Heart right ventricle (tissue), 16 donors: ENCODE measurements at regions of chr22 and their contacts with region 1.

Region 1: GRCh38 chr22:37887610-37888378 is 18.3 kb upstream of the MICALL1 start:
- DNase-seq: no peak
- ATAC-seq: peak; percentile 47 to 77 (median 66)
- H3K4me3 ChIP-seq: no peak overlapping the region
- H3K27ac ChIP-seq: peak overlapping the region in 3 of 10 donors; percentile 39 to 40 (median 39)
- H3K4me1 ChIP-seq: peaks cover 0 to 25% (median 9%) of the 10 kb centered on the region in 9 donors
- H3K27me3 ChIP-seq: no peaks in the 10 kb centered on the region
- CTCF ChIP-seq: peak; percentile 6 to 64 (median 52)

Region 2: GRCh38 chr22:37777122-37777687 is 110.6 kb before region 1 on chr22:
- intact Hi-C with region 1: no loop called
- DNase-seq: peak; percentile 31 to 40
- ATAC-seq: peak in 6 of 8 donors; percentile 2 to 36 (median 22)
- H3K4me3 ChIP-seq: no peak overlapping the region
- H3K27ac ChIP-seq: peak overlapping the region in 1 of 10 donors; percentile 6
- H3K4me1 ChIP-seq: peaks cover 0 to 24% (median 9%) of the 10 kb centered on the region in 9 donors
- H3K27me3 ChIP-seq: no peaks in the 10 kb centered on the region
- CTCF ChIP-seq: no peak

Region 3: DNA sequence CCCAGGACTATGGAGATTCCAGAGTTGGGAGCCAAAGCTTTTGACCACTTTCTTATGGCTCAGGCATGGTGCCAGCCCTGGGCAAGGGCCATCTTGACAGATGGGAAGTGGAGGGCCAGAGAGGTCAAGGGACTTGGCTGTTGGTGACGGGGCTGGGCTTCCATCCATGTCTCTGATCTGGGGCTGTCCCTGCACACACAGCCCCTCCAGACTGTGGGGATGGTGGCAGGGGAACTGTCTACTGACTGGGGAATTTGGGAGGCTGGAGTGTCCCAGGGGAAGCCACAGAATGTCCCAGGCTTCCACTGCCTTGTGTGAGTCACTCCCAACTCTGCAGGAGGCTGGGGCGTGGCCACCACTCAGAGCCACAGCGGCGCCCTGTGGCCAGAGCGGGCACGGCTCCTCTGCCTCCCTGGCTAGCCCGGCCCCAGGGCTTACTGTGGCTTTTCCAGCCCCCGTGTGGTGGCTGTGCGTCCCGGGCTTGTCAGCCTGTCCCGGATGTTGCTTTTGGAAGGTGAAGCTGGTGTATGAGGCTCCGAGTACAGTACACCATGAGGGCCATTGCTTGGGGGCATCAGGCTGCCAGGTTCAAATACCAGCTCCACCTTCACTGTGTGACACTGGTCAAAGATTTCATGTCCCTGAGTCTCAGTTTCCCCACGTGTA is 46.0 kb after region 1 on chr22:
- intact Hi-C with region 1: loop called in 6 of 10 experiments (anchors 5 to 10 kb)
- DNase-seq: peak; percentile 89 to 90
- ATAC-seq: peak; percentile 94 to 98 (median 97)
- H3K4me3 ChIP-seq: no peak overlapping the region
- H3K27ac ChIP-seq: peak overlapping the region in 9 of 10 donors; percentile 31 to 80 (median 57)
- H3K4me1 ChIP-seq: peaks cover 7 to 46% (median 30%) of the 10 kb centered on the region in 9 donors
- H3K27me3 ChIP-seq: no peaks in the 10 kb centered on the region
- CTCF ChIP-seq: peak; percentile 90 to 100 (median 98)

Region 4: DNA sequence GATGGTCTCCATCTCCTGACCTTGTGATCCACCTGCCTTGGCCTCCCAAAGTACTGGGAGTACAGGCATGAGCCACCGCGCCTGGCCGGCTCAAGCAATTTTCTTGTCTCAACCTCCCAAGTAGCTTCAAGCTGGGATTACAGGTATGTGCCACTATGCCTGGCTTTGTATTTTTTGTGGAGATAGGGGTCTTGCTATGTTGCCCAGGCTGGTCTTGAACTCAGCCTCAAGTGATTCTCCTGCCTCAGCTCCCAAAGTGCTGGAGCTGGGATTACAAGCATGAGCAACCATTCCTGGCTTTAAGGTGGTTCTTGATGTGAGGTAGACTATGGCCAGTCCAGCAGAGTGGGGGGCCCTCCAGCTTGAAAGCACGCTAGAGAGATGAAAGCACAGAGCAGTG is 73.3 kb after region 1 on chr22:
- intact Hi-C with region 1: loop called in 4 of 10 experiments (anchors 5 to 10 kb)
- DNase-seq: no peak
- ATAC-seq: no peak
- H3K4me3 ChIP-seq: no peak overlapping the region
- H3K27ac ChIP-seq: no peak overlapping the region
- H3K4me1 ChIP-seq: peaks cover 0 to 22% (median 7%) of the 10 kb centered on the region in 9 donors
- H3K27me3 ChIP-seq: no peaks in the 10 kb centered on the region
- CTCF ChIP-seq: no peak

Region 5: DNA sequence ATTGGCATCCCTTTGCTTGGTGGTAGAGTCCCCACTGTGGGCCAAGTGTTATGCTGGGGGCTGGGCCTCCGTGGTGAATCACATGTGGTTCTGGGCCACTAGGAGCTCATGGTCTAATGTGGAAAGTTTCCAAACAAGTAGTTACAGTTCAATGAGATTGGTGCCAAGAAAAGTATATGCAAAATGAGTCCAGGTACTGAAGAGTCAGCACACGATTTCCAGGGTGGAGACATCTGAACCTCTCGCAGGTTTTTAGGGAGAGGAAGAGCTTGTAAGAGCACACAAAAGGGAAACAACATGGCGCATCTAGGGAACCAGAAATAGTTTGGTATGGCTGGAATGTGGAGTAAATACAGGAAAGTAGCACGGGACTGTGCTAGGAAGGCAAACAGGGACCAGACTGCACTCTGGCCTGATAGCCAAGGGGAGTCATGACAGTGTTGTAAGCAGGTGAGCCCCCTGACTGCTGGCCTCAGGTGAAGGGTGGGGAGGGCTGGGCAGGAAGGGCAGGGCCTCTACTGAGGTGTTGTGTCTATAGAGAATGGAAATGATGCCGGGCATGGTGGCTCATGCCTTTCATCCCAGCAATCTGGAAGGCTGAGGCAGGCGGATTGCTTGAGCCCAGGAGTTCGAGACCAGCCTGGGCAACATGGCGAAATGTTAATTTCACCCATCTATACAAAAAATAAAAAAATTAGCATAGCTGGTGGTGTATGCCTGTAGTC is 78.3 kb after region 1 on chr22:
- intact Hi-C with region 1: loop called in 4 of 10 experiments (anchors 5 to 10 kb)
- DNase-seq: no peak
- ATAC-seq: peak in 4 of 8 donors; percentile 54 to 69 (median 56)
- H3K4me3 ChIP-seq: no peak overlapping the region
- H3K27ac ChIP-seq: peak overlapping the region in 6 of 10 donors; percentile 8 to 70 (median 44)
- H3K4me1 ChIP-seq: peaks cover 0 to 25% (median 12%) of the 10 kb centered on the region in 9 donors
- H3K27me3 ChIP-seq: no peaks in the 10 kb centered on the region
- CTCF ChIP-seq: no peak